ENCODE measurements at regions of chr3 and their contacts with region 1.

Region 1: DNA sequence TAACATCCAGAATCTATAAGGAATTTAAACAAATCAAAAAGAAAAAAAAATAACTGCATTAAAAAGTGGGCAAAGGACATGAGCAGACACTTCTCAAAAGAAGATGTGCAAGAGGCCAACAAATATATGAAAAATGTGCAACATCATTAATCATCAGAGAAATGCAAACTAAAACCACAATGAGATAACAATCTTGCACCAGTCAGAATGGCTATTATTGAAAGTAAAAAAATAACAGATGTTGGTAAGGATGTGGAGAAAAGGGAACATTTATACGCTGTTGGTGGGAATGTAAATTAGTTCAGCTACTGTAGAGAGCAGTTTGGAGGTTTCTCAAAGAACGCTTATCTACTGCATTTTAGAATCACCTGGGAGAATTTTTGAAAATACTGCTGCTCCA is 186.1 kb downstream of the OTOL1 start:
- DNase-seq: peak; percentile 52
- ATAC-seq: no peak; the same call in 1 of the 2 replicates
- H3K4me3 ChIP-seq: no peak overlapping the region
- H3K27ac ChIP-seq: no peak overlapping the region
- H3K4me1 ChIP-seq: peaks cover 10% of the 10 kb centered on the region
- H3K27me3 ChIP-seq: no peaks in the 10 kb centered on the region
- CTCF ChIP-seq: no peak

Region 2: DNA sequence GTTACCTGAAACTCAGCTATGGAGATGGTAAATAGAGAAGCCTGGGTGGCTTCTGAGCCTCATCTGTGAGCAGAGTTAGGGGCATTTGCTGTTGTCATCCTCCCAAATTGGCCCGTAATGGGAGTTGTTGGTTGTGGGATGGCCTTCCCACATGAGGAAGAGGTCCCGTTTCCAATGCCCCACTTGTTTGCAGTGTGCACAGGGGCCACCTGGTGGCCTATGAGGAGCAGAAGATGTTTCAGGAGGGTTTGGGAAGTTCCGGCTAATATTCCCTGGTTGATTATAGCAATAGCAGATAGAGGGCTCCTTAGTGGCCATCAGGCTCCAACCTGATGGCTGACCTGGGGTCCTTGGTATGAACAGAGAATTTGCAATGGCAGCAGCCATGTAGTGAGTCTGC is 1360.4 kb after region 1 on chr3:
- CTCF ChIA-PET with region 1: no interaction called
- POLR2A ChIA-PET with region 1: no interaction called
- intact Hi-C with region 1: loop called (anchors 5 kb)
- DNase-seq: peak; percentile 62
- ATAC-seq: peak; percentile 76
- H3K4me3 ChIP-seq: no peak overlapping the region
- H3K27ac ChIP-seq: no peak overlapping the region
- H3K4me1 ChIP-seq: no peaks in the 10 kb centered on the region
- H3K27me3 ChIP-seq: no peaks in the 10 kb centered on the region
- CTCF ChIP-seq: peak; percentile 81